Left cardiac atrium (tissue), 4 donors: ENCODE measurements at regions of chr11 and their contacts with region 1.

Region 1: GRCh38 chr11:117843666-117844484 is 19.3 kb upstream of the FXYD2 start:
- DNase-seq: peak; percentile 82
- ATAC-seq: peak; percentile 66 to 71

Region 2: DNA sequence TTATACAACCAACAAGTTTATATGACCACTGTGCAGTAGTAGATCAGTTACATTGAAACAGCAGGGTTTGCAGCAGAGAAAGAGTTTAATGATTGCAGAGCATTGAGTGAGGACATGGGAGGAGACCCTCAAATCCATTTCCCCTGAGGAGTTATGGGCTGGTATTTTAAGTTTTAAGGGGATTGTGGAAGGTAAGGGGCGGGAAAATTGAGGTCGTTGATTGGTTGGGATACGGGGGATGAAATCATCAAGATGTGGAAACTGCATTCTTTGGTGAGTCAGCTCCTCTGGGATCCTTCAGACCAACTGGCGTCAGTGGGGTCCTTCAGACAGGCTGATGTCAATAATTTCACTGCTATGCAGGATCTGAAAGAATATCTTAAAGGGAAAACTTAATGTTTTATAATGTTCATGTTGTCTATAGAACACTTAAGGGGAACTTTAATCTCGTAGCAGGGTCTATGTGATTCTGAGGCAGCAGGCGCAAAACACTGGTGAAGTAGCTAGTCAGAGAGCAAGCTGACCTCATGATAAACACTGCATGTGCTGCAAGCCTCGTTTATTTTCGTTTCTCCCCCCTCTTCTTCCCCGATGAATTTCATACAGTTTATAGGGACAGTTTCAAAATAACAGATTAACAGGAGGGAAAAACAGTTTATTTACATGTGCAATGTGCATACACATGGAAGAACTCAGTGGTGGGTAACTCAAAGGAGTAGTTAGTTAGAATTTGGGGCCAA is 570.2 kb before region 1 on chr11:
- intact Hi-C with region 1: no loop called
- DNase-seq: no peak
- ATAC-seq: no peak

Region 3: DNA sequence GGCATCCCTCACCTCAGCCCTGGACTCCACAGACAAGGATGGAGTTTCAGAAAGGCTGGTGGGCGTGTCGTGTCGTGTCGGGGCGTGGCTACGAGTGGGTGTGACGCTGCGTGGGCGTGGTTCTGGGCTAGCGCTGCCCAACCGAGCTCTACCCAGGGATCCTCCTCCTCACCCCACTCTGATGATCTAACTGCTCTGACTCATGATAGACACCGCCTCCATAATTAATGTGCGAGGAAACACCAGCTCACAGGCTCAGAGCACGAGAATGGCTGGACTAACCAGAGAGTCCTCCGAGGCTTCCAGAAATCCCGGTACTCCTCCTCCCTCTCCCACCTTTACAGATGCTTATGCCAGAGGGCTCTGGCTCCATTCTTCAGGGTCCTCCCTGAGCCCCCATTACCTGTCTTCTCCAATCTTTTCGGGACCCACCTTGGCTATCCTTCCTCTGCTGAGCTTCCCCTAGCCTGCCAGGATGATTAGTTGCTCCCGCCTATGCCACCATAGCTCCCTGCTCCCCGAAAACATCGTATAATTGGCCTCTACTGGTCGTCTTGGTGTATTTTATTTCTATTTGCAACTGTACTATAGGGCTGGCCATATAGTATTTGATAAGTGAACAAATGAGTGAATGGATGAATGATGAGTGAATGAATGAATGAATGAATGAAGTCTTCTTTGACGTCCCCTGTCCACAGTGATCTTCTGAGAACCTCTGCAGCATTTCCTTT is 63.5 kb after region 1 on chr11:
- intact Hi-C with region 1: loop called in 1 of 2 experiments (anchors 5 kb)
- DNase-seq: peak; percentile 89
- ATAC-seq: peak; percentile 95 to 98

Region 4: DNA sequence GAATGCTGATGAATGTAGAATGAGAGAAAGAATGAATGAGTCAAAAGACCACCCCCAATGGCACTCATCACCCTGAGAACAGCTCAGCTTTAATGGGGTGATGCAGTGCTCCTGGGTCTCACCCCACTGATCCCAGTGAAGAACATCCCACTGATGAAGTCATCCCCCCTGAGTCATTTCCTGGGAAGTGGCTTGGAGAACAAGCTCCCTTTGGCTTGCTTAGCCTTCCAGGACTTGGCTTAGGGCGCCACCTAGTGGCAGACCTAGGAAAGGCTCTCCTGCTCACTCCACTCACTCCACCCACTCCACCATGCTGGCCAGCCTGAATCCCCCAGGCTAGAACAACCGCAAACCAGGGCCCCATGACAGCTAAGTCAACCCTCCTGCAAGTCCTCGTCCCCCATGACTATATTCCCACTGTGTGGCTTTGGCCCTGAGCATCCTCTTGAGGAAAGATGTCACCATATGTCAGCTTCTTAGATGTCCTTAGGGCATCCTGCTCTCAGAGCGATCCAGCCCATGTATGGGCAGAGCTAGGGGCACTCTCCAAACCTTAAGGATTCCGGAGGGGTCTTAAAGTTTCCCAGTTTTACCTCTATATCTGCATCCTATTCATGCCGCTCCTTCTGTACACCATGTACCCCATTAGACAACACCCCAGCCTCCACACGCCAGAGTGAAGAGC is 103.1 kb after region 1 on chr11:
- intact Hi-C with region 1: loop called (anchors 1 to 2 kb)
- DNase-seq: peak; percentile 91
- ATAC-seq: peak; percentile 92 to 94